Activated T-helper 1 cell treated with anti-CD3 and anti-CD28 coated beads, Interleukin-12 subunit alpha, Interleukin-12 subunit beta, Interleukin-2, Interleukin-4 antibody, amounts not matched to agents 30 ng/mL and 10 ng/mL and 1 ng/mL, durations not matched to agents 14 hours and 24 hours and 36 hours (primary cell): ENCODE measurements at regions of chrX and their contacts with region 1.

Region 1: DNA sequence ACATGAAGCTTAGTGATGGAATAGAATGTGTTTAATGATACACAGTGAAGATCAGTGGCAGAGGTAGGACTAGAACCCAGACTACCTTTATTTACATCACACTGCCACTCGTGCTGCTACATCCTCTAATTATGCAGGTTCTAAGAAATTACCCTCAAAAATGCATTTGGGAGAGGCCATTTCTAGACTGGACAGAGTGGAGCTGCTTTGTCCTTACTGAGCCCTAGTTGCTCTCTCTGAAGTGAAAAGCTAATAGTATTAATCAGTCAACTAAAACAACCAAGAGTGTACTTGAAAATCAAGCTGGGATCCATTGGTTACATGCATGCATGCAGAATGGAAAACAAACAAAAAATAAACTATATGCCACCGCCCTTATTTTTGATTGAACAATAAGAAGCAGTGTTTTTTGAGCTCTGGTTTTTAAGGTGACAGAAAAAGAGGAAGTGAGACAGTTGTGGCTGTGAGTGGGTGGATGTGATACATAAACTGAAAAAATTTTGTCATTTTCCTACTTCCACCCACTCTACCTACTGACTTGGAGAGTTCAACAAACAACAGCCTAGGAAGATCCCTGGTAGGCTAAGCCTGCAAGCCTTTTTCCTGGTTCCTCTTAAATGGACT is 6.8 kb upstream of the VSIG4 start:
- DNase-seq: peak; percentile 14
- H3K4me3 Mint-ChIP-seq: peak overlapping the region; percentile 69
- H3K27ac Mint-ChIP-seq: peak overlapping the region; percentile 100
- H3K4me1 Mint-ChIP-seq: peaks cover 40% of the 10 kb centered on the region
- H3K27me3 Mint-ChIP-seq: no peaks in the 10 kb centered on the region

Region 2: GRCh38 chrX:65667503-65668376 is 379.0 kb before region 1 on chrX and contains the start of gene MSN:
- intact Hi-C with region 1: loop called (anchors 1 kb)
- DNase-seq: peak; percentile 74
- H3K4me3 Mint-ChIP-seq: peak within 1 kb of the TSS; percentile 98
- H3K27ac Mint-ChIP-seq: peak within 1 kb of the TSS; percentile 97
- H3K4me1 Mint-ChIP-seq: peaks cover 43% of the 10 kb centered on the region
- H3K27me3 Mint-ChIP-seq: no peaks in the 10 kb centered on the region
- total RNA-seq, gene MSN: 479 and 484 TPM in 2 replicates

Region 3: DNA sequence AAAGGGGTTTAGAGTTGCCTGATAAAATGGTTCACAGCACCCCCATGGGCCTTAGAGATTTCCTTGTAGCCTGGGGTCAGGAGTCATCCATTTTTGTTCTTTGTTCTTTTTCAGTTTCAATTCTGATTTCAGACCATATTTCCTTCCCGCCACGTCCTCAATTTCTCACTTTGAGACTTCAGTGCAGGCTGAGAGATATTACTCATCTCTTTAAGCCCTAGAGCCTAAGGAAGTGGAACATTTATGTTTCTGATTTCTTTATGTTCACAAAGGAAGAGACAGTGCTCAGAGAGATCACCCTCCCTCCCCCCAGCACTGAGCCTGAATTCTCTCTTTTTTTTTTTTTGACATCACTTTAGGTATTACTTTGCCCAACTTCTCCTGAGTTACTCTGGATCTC is 323.0 kb before region 1 on chrX:
- intact Hi-C with region 1: loop called (anchors 1 kb)
- DNase-seq: peak; percentile 34
- H3K4me3 Mint-ChIP-seq: peak overlapping the region; percentile 0
- H3K27ac Mint-ChIP-seq: peak overlapping the region; percentile 76
- H3K4me1 Mint-ChIP-seq: peaks cover 82% of the 10 kb centered on the region
- H3K27me3 Mint-ChIP-seq: no peaks in the 10 kb centered on the region

Region 4: GRCh38 chrX:65811558-65812228 is 235.0 kb before region 1 on chrX:
- intact Hi-C with region 1: no loop called
- DNase-seq: no peak
- H3K4me3 Mint-ChIP-seq: no peak overlapping the region
- H3K27ac Mint-ChIP-seq: no peak overlapping the region
- H3K4me1 Mint-ChIP-seq: no peaks in the 10 kb centered on the region
- H3K27me3 Mint-ChIP-seq: peaks cover 10% of the 10 kb centered on the region

Region 5: DNA sequence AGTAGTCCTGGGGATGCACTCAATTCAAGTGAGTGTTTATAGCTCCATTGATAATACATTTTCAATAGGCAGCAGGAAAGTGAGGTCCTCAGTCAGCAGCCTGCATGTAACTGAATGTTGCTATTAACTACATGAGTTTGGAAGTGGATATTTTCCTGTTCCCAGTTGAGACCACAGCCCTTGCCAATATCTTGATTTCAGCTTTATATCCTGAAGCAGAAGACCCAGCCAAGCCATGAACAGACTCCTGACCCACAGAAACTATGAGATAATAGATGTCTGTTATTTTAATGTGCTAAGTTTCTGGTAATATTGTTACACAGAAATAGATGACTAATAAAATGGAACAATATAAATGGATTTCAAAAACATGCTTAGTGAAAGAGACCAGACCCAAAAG is 70.6 kb before region 1 on chrX:
- intact Hi-C with region 1: no loop called
- DNase-seq: no peak
- H3K4me3 Mint-ChIP-seq: no peak overlapping the region
- H3K27ac Mint-ChIP-seq: no peak overlapping the region
- H3K4me1 Mint-ChIP-seq: no peaks in the 10 kb centered on the region
- H3K27me3 Mint-ChIP-seq: no peaks in the 10 kb centered on the region

Region 6: GRCh38 chrX:65994519-65995506 is 51.9 kb before region 1 on chrX:
- intact Hi-C with region 1: loop called (anchors 2 kb)
- DNase-seq: no peak
- H3K4me3 Mint-ChIP-seq: no peak overlapping the region
- H3K27ac Mint-ChIP-seq: peak overlapping the region; percentile 70
- H3K4me1 Mint-ChIP-seq: peaks cover 34% of the 10 kb centered on the region
- H3K27me3 Mint-ChIP-seq: no peaks in the 10 kb centered on the region

Region 7: DNA sequence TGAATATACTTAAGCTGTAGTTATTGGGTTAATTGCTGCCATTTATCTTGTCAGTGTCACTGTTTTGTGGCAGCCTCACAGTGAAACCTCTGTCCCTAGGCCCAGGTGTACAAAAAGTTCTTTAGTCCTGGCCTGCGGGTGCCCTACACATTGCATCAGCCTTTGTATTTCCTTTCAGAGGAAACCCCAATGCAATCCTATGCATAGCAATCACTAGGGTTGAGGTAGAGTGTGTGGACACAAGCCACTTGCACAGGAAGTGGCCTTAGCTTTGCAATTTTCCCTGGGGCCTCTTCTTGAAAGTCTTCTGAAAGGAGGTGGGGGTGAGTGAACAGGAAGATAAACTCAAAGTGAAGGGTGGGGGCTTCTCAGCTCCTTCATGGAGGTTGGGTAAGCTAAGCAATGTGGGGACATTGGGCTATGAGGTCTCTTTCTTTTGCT is 34.6 kb before region 1 on chrX:
- intact Hi-C with region 1: loop called (anchors 1 kb)
- DNase-seq: peak; percentile 16
- H3K4me3 Mint-ChIP-seq: peak overlapping the region; percentile 26
- H3K27ac Mint-ChIP-seq: peak overlapping the region; percentile 83
- H3K4me1 Mint-ChIP-seq: peaks cover 58% of the 10 kb centered on the region
- H3K27me3 Mint-ChIP-seq: no peaks in the 10 kb centered on the region

Region 8: DNA sequence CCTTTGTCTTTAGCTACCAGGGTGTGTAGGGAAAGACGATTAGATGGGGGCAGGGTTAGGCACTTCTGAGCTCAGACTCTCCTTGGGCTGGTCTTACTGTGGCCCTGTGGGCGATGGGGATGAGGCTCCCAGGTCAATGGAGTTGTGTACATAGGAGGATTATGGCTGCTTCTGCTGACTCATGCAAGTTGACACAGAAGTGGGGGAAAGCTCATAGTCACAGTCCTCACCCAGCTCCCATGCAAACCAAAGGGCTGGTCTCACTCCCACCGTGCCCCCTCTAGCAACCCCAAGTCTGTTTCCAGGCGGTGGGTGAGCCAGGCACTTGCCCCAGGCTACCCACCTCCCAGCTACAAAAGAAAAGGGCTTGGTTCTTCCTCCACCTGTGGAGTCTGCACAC is 17.5 kb after region 1 on chrX:
- intact Hi-C with region 1: no loop called
- DNase-seq: no peak
- H3K4me3 Mint-ChIP-seq: no peak overlapping the region
- H3K27ac Mint-ChIP-seq: no peak overlapping the region
- H3K4me1 Mint-ChIP-seq: peaks cover 26% of the 10 kb centered on the region
- H3K27me3 Mint-ChIP-seq: no peaks in the 10 kb centered on the region

Region 9: DNA sequence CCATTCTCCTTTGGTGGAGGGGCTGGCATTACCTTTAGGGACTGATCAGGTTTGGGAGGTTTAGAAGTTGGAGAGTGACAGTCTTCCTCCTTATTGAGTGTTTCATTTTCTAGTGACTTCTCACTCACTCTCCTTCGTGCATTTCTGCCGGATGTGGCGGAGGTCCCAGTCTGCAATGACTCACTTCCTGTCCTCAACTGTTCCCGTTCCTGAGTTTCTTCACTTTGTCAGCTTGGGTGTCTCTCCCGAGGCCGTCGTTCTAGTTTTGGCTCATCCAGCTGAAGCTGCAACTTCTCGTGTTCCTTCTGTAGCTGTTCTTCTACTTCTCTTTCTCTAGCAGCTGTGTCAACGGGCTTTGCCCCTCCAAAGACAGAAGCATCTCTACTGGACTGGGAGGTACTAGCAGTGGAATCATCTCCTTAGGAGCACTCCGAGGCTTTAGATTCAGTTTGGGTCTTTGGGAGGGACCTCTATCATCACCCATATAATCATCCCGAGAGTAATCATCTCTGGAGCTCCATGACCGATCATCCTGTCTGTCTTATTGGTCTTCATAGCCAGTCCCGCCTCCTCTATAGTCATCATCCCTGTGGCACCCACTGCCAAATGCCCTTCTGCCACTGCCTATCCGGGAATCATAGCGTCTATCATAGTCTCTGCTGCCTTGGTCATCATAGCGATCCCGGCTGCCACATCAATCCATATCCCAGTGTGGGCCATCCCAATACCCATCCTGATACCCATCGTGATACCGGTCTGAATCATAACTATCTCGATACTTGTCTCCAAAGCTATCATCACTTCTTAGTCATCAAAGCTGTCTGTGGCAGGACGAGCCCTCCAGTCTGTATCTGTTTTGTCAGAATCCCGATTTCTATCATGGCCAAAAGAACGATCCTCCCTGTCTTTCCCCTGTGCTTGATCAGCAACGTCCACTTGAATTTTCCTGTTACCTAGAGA is 28.5 kb after region 1 on chrX:
- intact Hi-C with region 1: loop called (anchors 1 kb)
- DNase-seq: peak; percentile 32
- H3K4me3 Mint-ChIP-seq: peak overlapping the region; percentile 75
- H3K27ac Mint-ChIP-seq: peak overlapping the region; percentile 89
- H3K4me1 Mint-ChIP-seq: peaks cover 27% of the 10 kb centered on the region
- H3K27me3 Mint-ChIP-seq: no peaks in the 10 kb centered on the region

Region 10: DNA sequence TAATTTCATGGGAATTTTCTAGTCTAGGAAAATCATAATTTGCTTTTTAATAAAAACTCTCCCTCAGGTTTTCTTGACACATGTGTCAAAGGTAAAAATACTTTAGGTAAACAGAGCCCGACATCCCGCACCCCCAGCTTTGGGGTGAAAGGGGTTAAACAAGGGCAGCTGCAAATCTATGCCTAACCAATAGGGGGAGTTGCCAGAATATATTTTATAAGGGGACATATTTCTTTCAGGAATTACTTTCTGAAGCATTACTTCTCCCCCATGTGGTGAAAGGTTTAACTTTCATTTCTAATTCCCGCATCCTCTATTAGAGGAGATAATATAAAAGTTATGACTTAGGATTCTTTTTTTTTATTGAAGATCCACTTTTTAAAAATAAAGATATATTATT is 63.4 kb after region 1 on chrX:
- intact Hi-C with region 1: loop called (anchors 5 kb)
- DNase-seq: no peak
- H3K4me3 Mint-ChIP-seq: no peak overlapping the region
- H3K27ac Mint-ChIP-seq: no peak overlapping the region
- H3K4me1 Mint-ChIP-seq: peaks cover 8% of the 10 kb centered on the region
- H3K27me3 Mint-ChIP-seq: no peaks in the 10 kb centered on the region

Region 11: GRCh38 chrX:66437719-66438118 is 391.0 kb after region 1 on chrX:
- intact Hi-C with region 1: no loop called
- DNase-seq: no peak
- H3K4me3 Mint-ChIP-seq: no peak overlapping the region
- H3K27ac Mint-ChIP-seq: no peak overlapping the region
- H3K4me1 Mint-ChIP-seq: no peaks in the 10 kb centered on the region
- H3K27me3 Mint-ChIP-seq: peaks cover 3% of the 10 kb centered on the region